ENCODE measurements at regions of chr9 and their contacts with region 1.

Region 1: DNA sequence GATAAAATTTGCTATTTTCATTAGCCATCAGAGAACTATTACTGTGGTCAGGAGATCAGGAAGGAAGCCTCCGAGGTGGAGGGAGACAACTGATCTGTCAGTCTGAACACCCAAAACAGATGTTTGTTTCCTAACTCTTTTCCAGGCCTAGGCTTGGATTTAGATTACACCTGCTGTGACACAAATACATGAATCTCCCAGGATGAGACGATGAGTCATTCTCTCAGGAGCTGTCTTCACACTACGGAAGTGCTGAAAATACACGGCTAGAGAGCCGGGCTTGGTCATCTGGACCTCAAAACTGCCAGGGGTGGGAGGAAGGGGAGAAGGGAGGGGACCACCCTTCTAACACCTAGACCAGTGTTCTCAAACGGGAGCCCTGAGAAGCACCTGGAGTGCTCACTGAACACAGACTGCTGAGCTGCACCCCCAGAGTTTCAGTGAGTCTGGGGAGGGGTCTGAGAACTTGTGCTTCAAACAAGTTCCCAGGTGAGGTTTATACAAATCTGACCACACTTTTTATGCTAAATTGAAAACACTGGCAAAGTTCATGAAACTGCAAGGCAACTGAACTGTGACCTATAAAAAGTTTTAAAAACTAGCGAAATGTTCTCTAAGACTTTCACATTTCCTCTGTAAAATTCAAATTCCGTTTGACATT is 80.3 kb upstream of the EQTN start:
- DNase-seq: no peak
- H3K4me3 ChIP-seq: no peak overlapping the region
- H3K27ac ChIP-seq: no peak overlapping the region
- H3K4me1 ChIP-seq: no peaks in the 10 kb centered on the region
- H3K27me3 ChIP-seq: no peaks in the 10 kb centered on the region
- CTCF ChIP-seq: no peak

Region 2: GRCh38 chr9:26483991-26484390 is 893.3 kb before region 1 on chr9:
- CTCF ChIA-PET with region 1: no interaction called
- POLR2A ChIA-PET with region 1: no interaction called
- intact Hi-C with region 1: no loop called
- DNase-seq: no peak
- H3K4me3 ChIP-seq: no peak overlapping the region
- H3K27ac ChIP-seq: no peak overlapping the region
- H3K4me1 ChIP-seq: no peaks in the 10 kb centered on the region
- H3K27me3 ChIP-seq: no peaks in the 10 kb centered on the region
- CTCF ChIP-seq: no peak

Region 3: DNA sequence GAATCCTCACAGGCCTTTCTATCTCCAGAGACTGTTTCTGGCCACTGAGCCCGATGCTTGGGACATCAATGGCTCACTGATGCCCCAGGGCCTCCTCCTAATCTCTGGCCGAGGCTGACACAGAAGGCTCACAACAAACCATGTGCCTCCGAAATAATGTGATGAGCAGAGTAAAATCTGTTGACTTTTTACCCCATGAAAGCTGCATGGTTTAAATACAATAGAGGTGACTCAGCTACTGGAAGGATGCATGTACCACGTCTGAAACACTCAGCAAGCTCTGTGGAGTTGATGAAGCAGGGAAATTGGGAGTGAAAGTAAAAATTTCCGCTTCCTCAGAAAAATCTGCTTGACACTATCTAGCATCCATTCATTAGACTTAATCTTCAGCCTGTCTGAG is 30.7 kb after region 1 on chr9:
- CTCF ChIA-PET with region 1: no interaction called
- POLR2A ChIA-PET with region 1: no interaction called
- intact Hi-C with region 1: no loop called
- DNase-seq: peak in 1 of 2 experiments; percentile 49
- H3K4me3 ChIP-seq: no peak overlapping the region
- H3K27ac ChIP-seq: no peak overlapping the region
- H3K4me1 ChIP-seq: no peaks in the 10 kb centered on the region
- H3K27me3 ChIP-seq: no peaks in the 10 kb centered on the region
- CTCF ChIP-seq: no peak

Region 4: GRCh38 chr9:27427273-27427645 is 50.0 kb after region 1 on chr9:
- CTCF ChIA-PET with region 1: no interaction called
- POLR2A ChIA-PET with region 1: no interaction called
- intact Hi-C with region 1: loop called (anchors 10 kb)
- DNase-seq: peak; percentile 55 to 78
- H3K4me3 ChIP-seq: no peak overlapping the region
- H3K27ac ChIP-seq: peak overlapping the region; percentile 47
- H3K4me1 ChIP-seq: peaks cover 44% of the 10 kb centered on the region
- H3K27me3 ChIP-seq: no peaks in the 10 kb centered on the region
- CTCF ChIP-seq: no peak